ENCODE measurements at regions of chr11 and their contacts with region 1.

Region 1: DNA sequence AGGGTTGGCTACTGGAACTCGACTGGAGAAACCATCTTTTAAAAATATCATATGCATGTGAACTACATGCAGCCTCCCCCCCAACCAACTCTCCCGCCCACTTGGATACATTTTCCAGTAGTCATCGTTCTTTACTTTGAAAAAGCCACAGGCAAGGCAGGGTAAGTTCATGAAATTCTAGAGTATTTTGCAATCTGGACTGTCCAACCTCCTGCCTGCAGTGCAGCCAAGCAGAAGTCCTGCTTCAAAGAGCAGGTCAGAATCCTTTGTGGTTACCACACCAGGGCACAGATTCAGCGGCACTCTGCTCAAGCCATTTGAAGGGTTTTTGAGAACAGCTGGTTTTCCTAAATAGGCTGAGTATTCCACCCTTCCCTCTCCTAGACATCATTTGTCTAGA is 12.1 kb downstream of the ELF5 start:
- DNase-seq: peak; percentile 97
- H3K4me3 ChIP-seq: no peak overlapping the region
- CTCF ChIP-seq: no peak

Region 2: DNA sequence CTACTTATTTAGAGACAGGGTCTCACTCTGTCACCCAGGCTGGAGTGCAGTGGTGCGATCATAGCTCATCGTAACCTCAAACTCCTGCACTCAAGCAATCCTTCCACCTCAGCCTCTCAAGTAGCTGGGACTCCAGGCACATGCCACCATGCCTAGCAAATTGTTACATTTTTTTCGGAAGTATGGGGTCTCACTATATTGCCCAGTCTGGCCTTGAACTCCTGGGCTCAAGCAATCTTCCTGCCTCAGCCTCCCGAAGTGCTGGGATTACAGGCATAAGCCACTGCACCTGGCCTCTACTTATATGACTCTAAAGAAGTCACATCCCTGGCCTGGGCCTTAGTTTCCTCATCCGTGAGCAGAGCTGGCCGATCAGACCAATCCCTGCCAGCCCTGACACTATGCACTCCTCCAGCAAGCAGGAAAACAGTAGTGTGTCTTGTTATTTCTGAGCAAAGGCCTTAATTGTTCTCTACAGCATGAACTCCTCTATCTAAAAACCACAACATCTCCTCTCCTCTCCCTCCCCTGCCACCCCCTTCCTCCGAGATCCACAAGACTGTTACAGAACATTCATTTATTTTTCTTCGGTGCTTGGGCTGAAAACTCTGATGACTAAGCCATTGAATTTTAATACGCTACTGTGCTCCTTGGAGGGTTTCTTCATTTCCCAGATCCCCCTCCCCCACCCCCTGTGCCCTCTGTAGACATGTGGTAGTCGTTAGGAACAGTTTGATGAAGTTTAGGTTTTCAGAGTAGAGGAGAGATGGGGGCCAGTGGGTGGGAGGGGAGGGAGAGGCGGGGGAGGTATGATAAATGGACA is 235.2 kb before region 1 on chr11:
- in situ Hi-C with region 1: no loop called
- DNase-seq: peak; percentile 94
- H3K4me3 ChIP-seq: no peak overlapping the region
- CTCF ChIP-seq: no peak

Region 3: GRCh38 chr11:34449013-34449412 is 52.5 kb before region 1 on chr11:
- in situ Hi-C with region 1: loop called (anchors 5 kb)
- DNase-seq: no peak
- H3K4me3 ChIP-seq: no peak overlapping the region
- CTCF ChIP-seq: no peak

Region 4: GRCh38 chr11:34570584-34570983 is 69.1 kb after region 1 on chr11:
- in situ Hi-C with region 1: loop called (anchors 5 kb)
- DNase-seq: peak; percentile 12
- H3K4me3 ChIP-seq: no peak overlapping the region
- CTCF ChIP-seq: no peak

Measured in astrocyte of the cerebellum (primary cell).